Dorsolateral prefrontal cortex (tissue), 120 donors: ENCODE measurements at regions of chr10 and their contacts with region 1.

Region 1: DNA sequence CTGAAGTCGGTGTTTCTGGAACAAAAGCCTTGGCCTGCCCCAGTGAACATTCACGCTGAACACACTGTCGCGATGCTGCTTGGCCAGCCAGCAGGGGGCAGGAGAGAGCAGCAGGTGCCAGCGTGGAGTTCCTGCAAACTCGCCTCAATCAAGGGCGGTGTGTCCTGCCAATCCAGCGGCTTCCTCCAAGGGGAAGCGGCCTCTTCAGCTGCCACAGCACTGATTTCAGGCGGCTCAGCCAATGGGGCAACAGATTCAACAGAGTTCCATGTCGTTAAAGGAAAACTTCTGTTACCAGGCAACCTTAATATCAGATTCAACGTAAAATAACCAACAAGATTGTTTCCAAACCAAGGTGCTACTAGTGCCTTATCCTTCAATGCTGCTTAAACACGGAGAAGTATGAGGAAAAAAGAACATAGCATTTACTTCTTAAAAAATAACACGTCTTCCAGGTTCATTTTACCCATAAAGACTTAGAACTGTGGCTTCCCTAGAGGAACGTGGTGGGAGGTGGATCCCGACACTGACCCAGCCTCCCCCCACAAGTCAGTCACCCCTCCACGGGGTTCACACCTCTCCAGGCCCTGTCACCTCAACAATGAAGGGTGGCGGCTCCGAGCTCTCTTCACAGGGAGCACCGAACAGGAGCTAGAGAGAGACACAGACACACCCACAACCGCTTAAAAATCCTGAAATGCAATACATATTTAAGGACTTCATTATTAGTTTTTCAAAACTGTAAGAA is 178.2 kb downstream of the DIP2C start:
- DNase-seq: peak; percentile 88 to 96 (median 93)
- H3K4me3 ChIP-seq: peak overlapping the region in 26 of 59 donors; percentile 0 to 44 (median 20)
- H3K27ac ChIP-seq: peak overlapping the region in 57 of 59 donors; percentile 32 to 94 (median 84)
- H3K27me3 ChIP-seq: no peaks in the 10 kb centered on the region
- CTCF ChIP-seq: peak; percentile 82 to 99 (median 96)

Region 2: DNA sequence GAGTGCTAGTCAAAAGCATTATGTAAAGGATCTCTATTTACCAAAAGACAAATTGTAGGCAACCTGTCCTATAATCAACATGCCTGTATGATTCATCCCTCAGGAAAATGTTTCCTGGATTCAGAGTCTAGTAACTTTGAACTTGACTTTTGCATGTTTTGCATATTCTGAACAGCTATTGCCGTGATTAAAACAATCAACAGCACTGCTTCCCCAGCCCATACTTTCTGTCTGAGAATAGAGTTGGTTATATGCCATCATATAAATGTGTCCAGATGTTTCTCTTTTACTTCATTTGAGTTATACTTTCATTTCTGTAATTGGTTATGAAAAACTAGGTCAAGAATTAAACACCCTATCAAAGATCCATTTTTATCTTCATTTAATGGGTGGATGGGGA is 292.5 kb before region 1 on chr10:
- intact Hi-C with region 1: no loop called
- DNase-seq: no peak
- H3K4me3 ChIP-seq: no peak overlapping the region
- H3K27ac ChIP-seq: no peak overlapping the region
- H3K27me3 ChIP-seq: no peaks in the 10 kb centered on the region
- CTCF ChIP-seq: no peak

Region 3: GRCh38 chr10:397321-398075 is 113.8 kb before region 1 on chr10:
- intact Hi-C with region 1: loop called (anchors 5 to 10 kb)
- DNase-seq: no peak
- H3K4me3 ChIP-seq: no peak overlapping the region
- H3K27ac ChIP-seq: peak overlapping the region in 3 of 59 donors; percentile 4 to 13 (median 13)
- H3K27me3 ChIP-seq: no peaks in the 10 kb centered on the region
- CTCF ChIP-seq: no peak

Region 4: GRCh38 chr10:451021-451471 is 60.2 kb before region 1 on chr10:
- intact Hi-C with region 1: loop called in 1 of 2 experiments (anchors 2 kb)
- DNase-seq: no peak
- H3K4me3 ChIP-seq: no peak overlapping the region
- H3K27ac ChIP-seq: peak overlapping the region in 24 of 59 donors; percentile 6 to 66 (median 22)
- H3K27me3 ChIP-seq: no peaks in the 10 kb centered on the region
- CTCF ChIP-seq: no peak

Region 5: GRCh38 chr10:615583-616152 is 104.4 kb after region 1 on chr10:
- intact Hi-C with region 1: loop called (anchors 2 to 5 kb)
- DNase-seq: peak in 2 of 10 donors; percentile 33 to 64
- H3K4me3 ChIP-seq: peak overlapping the region in 17 of 59 donors; percentile 2 to 52 (median 25)
- H3K27ac ChIP-seq: peak overlapping the region in 58 of 59 donors; percentile 41 to 100 (median 89)
- H3K27me3 ChIP-seq: no peaks in the 10 kb centered on the region
- CTCF ChIP-seq: no peak

Region 6: GRCh38 chr10:689433-690371 is 178.4 kb after region 1 on chr10 and contains the start of gene DIP2C:
- intact Hi-C with region 1: loop called (anchors 5 kb)
- DNase-seq: peak in 8 of 10 donors; percentile 35 to 80 (median 64)
- H3K4me3 ChIP-seq: peak within 1 kb of the TSS; percentile 59 to 94 (median 86)
- H3K27ac ChIP-seq: peak within 1 kb of the TSS; percentile 71 to 98 (median 94)
- H3K27me3 ChIP-seq: no peaks in the 10 kb centered on the region
- CTCF ChIP-seq: peak in 1 of 56 donors; percentile 4
- total RNA-seq, gene DIP2C: 39.6 to 102 (median 58.2) TPM

Region 7: GRCh38 chr10:784403-785088 is 273.3 kb after region 1 on chr10:
- intact Hi-C with region 1: loop called (anchors 5 kb)
- DNase-seq: peak; percentile 56 to 93 (median 80)
- H3K4me3 ChIP-seq: peak overlapping the region; percentile 26 to 75 (median 55)
- H3K27ac ChIP-seq: peak overlapping the region in 32 of 59 donors; percentile 2 to 80 (median 44)
- H3K27me3 ChIP-seq: peaks cover 0 to 5% (median 0%) of the 10 kb centered on the region in 45 donors
- CTCF ChIP-seq: peak in 25 of 56 donors; percentile 5 to 52 (median 20)

Region 8: GRCh38 chr10:804787-805619 is 293.7 kb after region 1 on chr10:
- intact Hi-C with region 1: loop called in 1 of 2 experiments (anchors 5 kb)
- DNase-seq: peak in 1 of 10 donors; percentile 2
- H3K4me3 ChIP-seq: no peak overlapping the region
- H3K27ac ChIP-seq: no peak overlapping the region
- H3K27me3 ChIP-seq: no peaks in the 10 kb centered on the region
- CTCF ChIP-seq: no peak